PC-9 (cell line): ENCODE measurements at regions of chr6 and their contacts with region 1.

Region 1: DNA sequence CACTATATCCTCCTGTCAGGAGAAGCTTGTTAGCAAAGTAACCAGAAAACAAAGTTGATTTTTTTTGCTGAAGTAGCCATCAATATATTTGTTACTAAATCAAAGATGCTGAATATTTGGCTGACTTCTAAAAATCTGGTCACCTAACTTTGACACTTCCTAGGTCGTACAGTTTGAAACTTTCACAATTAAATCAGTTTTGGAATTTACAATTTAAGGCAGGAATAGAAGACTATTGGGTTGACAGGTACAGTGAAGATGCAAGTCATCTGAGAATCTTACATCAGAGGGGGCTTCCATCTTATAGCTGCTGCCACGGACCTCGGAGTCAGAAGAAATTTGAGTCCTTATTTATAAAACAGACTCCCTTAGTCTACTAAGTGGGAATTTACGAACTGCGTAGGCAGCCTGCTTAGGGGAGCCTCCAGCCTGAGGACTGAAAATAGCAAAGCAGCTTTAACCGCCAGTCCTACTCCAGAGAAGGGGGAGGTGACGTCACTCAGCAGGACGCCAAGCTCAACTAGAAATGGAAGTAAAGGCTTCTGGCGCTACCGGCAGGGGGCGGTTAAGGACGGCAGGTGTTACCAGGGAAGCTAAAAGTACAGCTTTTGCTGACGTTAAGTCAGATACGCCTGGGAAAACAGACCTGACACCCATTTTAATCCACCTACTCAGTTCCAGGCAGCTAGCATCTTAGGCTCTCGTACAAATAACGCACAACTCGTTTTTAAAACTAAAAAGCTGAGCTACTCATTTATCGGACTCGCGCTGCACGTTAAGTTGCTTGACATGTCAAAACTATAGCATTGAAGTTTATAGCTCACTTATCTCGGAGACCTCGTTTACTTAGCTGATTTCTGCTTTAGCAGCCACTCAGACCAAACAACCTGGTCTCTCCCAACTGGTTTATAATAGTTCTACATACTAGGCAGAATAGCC is 61.1 kb upstream of the HFE start:
- DNase-seq: peak; percentile 92 to 93
- H3K4me3 ChIP-seq: peak overlapping the region; percentile 75
- H3K27ac ChIP-seq: peak overlapping the region; percentile 98
- H3K4me1 ChIP-seq: peaks cover 57% of the 10 kb centered on the region
- H3K27me3 ChIP-seq: no peaks in the 10 kb centered on the region
- CTCF ChIP-seq: peak; percentile 89

Region 2: GRCh38 chr6:25992413-25993037 is 33.6 kb before region 1 on chr6:
- CTCF ChIA-PET with region 1: interaction called, 6 read pairs
- POLR2A ChIA-PET with region 1: interaction called, 63 read pairs
- intact Hi-C with region 1: loop called (anchors 2 kb)
- DNase-seq: peak; percentile 77 to 99
- H3K4me3 ChIP-seq: peak overlapping the region; percentile 83
- H3K27ac ChIP-seq: peak overlapping the region; percentile 76
- H3K4me1 ChIP-seq: peaks cover 10% of the 10 kb centered on the region; the same call in 1 of the 2 replicates
- H3K27me3 ChIP-seq: no peaks in the 10 kb centered on the region
- CTCF ChIP-seq: peak; percentile 88

Region 3: GRCh38 chr6:26054857-26055669 is 28.9 kb after region 1 on chr6:
- CTCF ChIA-PET with region 1: interaction called, 4 read pairs
- POLR2A ChIA-PET with region 1: interaction called, 12 read pairs
- intact Hi-C with region 1: loop called (anchors 1 kb)
- DNase-seq: peak; percentile 79 to 94
- H3K4me3 ChIP-seq: peak overlapping the region; percentile 79
- H3K27ac ChIP-seq: peak overlapping the region; percentile 95
- H3K4me1 ChIP-seq: peaks cover 26% of the 10 kb centered on the region
- H3K27me3 ChIP-seq: no peaks in the 10 kb centered on the region
- CTCF ChIP-seq: 0 out of 2 replicates have a peak, but pooled peaks have one; percentile 16

Region 4: GRCh38 chr6:26204332-26205165 is 178.4 kb after region 1 on chr6:
- CTCF ChIA-PET with region 1: interaction called, 3 read pairs
- POLR2A ChIA-PET with region 1: interaction called, 27 read pairs
- intact Hi-C with region 1: no loop called
- DNase-seq: peak; percentile 91 to 94
- H3K4me3 ChIP-seq: peak overlapping the region; percentile 63
- H3K27ac ChIP-seq: peak overlapping the region; percentile 91
- H3K4me1 ChIP-seq: peaks cover 36% of the 10 kb centered on the region
- H3K27me3 ChIP-seq: no peaks in the 10 kb centered on the region
- CTCF ChIP-seq: 0 out of 2 replicates have a peak, but pooled peaks have one; percentile 20

Region 5: DNA sequence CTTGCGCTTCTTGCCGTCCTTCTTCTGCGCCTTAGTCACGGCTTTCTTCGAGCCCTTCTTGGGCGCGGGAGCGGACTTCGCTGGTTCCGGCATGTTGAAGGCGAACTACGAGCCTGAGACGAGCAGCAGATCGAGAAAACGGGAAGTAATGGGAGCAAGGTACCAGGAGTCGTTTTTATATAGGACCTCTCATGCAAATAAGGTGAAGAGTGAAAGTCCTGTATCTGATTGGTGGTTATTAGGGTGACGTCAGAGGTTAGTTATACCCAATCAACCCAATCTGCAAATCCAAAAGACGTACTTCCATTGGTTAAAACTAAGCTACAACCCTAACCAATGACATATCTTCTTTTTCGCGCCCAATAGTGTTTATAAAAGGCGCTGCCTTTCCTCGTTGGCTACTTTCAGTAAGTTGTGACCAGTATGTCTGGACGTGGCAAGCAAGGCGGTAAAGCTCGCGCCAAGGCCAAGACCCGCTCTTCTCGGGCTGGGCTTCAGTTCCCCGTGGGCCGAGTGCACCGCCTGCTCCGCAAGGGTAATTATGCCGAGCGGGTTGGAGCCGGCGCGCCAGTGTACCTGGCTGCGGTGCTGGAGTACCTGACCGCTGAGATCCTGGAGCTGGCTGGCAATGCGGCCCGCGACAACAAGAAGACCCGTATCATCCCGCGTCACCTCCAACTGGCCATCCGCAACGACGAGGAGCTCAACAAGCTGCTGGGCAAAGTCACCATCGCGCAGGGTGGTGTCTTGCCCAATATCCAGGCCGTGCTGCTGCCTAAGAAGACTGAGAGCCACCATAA is 1120.7 kb after region 1 on chr6:
- CTCF ChIA-PET with region 1: no interaction called
- POLR2A ChIA-PET with region 1: interaction called, 11 read pairs
- intact Hi-C with region 1: loop called (anchors 5 kb)
- DNase-seq: peak; percentile 89 to 98
- H3K4me3 ChIP-seq: peak overlapping the region; percentile 91
- H3K27ac ChIP-seq: peak overlapping the region; percentile 75
- H3K4me1 ChIP-seq: peaks cover 2% of the 10 kb centered on the region; the same call in 1 of the 2 replicates
- H3K27me3 ChIP-seq: no peaks in the 10 kb centered on the region
- CTCF ChIP-seq: no peak